Spleen (tissue), 13 donors: ENCODE measurements at regions of chr6 and their contacts with region 1.

Region 1: GRCh38 chr6:13194852-13195251 is 133.5 kb downstream of the TBC1D7 start:
- DNase-seq: no peak
- H3K4me3 ChIP-seq: no peak overlapping the region
- H3K27ac ChIP-seq: no peak overlapping the region
- H3K4me1 ChIP-seq: peaks cover 0 to 9% (median 3%) of the 10 kb centered on the region in 6 donors
- H3K27me3 ChIP-seq: no peaks in the 10 kb centered on the region
- CTCF ChIP-seq: peak in 10 of 11 experiments; percentile 16 to 60 (median 44)
- POLR2A ChIP-seq: no peak

Region 2: GRCh38 chr6:13272131-13273046 is 77.5 kb after region 1 on chr6:
- intact Hi-C with region 1: loop called (anchors 10 kb)
- DNase-seq: peak; percentile 93
- H3K4me3 ChIP-seq: peak overlapping the region; percentile 24 to 72 (median 41)
- H3K27ac ChIP-seq: peak overlapping the region; percentile 44 to 84 (median 78)
- H3K4me1 ChIP-seq: peaks cover 0 to 94% (median 33%) of the 10 kb centered on the region in 6 donors
- H3K27me3 ChIP-seq: no peaks in the 10 kb centered on the region
- CTCF ChIP-seq: no peak
- POLR2A ChIP-seq: peak in 1 of 3 donors; percentile 51